ENCODE measurements at regions of chr9 and their contacts with region 1.

Region 1: GRCh38 chr9:123349691-123350480 is 6.1 kb upstream of the CRB2 start:
- DNase-seq: peak; percentile 34
- H3K4me3 ChIP-seq: no peak overlapping the region
- H3K27ac ChIP-seq: no peak overlapping the region
- H3K4me1 ChIP-seq: peaks cover 4% of the 10 kb centered on the region
- H3K27me3 ChIP-seq: no peaks in the 10 kb centered on the region
- CTCF ChIP-seq: peak; percentile 95 to 99

Region 2: DNA sequence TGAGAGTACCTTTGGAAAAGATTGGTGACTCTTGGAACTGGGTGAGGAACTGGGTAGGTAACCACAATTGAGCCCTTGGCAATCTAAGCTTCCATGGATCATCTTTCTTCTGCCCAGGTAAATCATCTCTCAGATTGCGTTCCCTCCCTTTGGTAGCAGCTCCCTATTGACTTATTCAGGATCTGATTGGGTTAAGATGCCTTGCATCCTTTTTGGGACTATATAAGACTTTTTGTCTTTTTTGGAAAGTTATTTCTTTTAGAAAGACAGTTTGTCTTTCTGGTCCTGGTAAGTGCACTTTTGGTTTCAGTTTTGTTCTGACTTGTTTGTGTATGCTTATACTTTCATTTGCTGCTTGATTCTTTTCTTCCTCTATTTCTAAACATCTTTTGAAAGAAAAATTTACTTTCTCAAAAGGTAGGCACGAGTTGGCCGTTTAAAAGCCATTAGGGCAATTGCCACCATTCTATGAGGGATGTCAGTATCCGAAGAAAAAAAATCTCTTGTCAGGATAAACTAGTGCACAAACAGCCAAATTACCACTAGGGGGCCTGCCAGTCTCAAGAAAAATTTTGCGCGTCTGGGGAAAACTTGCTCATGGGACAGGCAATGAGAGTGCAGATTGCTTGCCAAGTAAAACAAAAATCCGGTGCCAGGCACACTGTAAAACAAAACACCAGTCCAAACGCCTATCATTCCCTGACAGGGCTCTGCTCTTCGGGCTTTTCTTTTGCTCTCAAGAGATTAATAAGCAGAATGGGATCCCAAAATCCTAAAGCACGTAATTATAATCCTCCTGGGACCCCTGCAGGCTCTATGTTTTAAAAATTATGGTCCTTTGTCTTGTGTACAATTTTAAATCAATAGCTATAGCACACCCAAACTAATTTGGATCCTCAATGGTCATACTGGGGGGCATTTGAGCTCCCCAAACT is 885.0 kb before region 1 on chr9:
- CTCF ChIA-PET with region 1: no interaction called
- dilution Hi-C with region 1: no loop called
- in situ Hi-C with region 1: loop called in 1 of 2 experiments (anchors 25 kb)
- intact Hi-C with region 1: loop called (anchors 1 kb)
- DNase-seq: peak; percentile 80
- H3K4me3 ChIP-seq: peak overlapping the region; percentile 47 to 72 (median 60)
- H3K27ac ChIP-seq: no peak overlapping the region
- H3K4me1 ChIP-seq: peaks cover 5% of the 10 kb centered on the region
- H3K27me3 ChIP-seq: no peaks in the 10 kb centered on the region
- CTCF ChIP-seq: peak; percentile 73 to 82

Region 3: DNA sequence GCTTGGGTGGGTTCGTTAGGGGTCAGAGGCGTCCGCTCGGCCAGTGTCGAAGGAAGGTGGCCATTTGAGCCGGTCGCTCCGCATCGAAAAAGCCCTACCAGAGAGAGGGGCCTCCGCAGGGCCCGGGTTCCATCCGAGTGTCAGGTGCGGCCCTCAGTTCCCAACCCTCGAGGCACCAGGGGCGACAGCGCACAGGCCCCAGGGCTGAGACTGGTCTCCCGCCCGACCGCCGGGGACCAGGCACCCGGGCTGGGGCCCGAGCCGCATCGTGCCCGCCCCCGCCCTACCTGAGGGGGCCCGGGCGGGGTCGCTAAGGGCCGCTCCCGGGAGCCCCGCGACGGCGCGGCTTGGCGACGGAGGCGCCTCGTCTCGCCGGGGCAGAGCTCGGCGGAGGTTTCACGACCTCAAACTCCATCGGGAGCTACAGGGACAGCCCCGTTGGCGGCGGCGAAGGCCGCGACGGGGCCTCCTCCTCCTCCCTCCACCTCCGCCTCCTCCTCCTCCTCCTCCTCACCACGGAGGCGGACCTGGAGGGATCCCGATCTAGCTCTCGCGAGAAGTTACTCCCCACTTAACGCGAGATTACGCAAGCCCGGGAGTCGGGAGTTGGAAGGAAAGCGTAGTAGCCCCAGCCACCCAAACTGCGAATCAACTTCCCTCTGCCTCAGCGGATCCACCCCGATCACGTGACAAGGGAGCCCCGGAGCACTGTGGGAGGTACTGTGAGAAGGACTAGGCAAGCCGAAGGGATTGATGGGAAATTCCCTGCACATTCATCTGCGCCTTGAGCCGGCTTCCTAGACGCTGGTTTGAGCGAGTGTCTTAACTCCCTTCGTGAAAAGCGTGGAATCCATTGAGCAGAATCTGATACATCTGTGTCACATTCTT is 444.8 kb before region 1 on chr9 and contains the start of gene RC3H2:
- CTCF ChIA-PET with region 1: no interaction called
- dilution Hi-C with region 1: no loop called
- in situ Hi-C with region 1: no loop called
- intact Hi-C with region 1: loop called (anchors 10 kb)
- DNase-seq: peak; percentile 100
- H3K4me3 ChIP-seq: peak within 1 kb of the TSS; percentile 64 to 88 (median 80)
- H3K27ac ChIP-seq: peak within 1 kb of the TSS; percentile 84
- H3K4me1 ChIP-seq: peaks cover 2% of the 10 kb centered on the region
- H3K27me3 ChIP-seq: no peaks in the 10 kb centered on the region
- CTCF ChIP-seq: no peak
- total RNA-seq, gene RC3H2: 55.6 to 68.7 TPM

Region 4: DNA sequence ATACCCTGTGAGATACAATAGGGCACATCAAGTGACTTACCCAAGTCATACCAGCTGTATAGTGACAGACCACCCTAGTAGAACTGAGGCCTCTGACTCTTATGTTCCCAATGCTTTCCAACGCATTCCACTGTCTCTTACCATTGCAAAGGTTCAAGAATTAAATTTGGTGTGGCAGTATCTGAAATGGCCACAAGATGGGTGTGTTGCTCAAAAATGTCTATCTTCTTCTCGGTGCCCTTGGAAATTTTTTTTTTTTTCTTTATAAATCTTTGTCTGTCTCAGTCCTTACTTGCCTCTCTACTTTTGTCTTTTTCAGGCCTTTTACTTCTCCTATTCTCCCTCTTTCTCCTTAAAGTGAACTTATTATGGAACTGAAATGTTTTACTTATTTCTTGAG is 268.1 kb before region 1 on chr9:
- CTCF ChIA-PET with region 1: interaction called, 4 read pairs
- dilution Hi-C with region 1: no loop called
- in situ Hi-C with region 1: loop called (anchors 5 kb)
- intact Hi-C with region 1: loop called (anchors 1 kb)
- DNase-seq: peak; percentile 23
- H3K4me3 ChIP-seq: no peak overlapping the region
- H3K27ac ChIP-seq: no peak overlapping the region
- H3K4me1 ChIP-seq: peaks cover 3% of the 10 kb centered on the region
- H3K27me3 ChIP-seq: no peaks in the 10 kb centered on the region
- CTCF ChIP-seq: peak; percentile 52 to 61

Region 5: DNA sequence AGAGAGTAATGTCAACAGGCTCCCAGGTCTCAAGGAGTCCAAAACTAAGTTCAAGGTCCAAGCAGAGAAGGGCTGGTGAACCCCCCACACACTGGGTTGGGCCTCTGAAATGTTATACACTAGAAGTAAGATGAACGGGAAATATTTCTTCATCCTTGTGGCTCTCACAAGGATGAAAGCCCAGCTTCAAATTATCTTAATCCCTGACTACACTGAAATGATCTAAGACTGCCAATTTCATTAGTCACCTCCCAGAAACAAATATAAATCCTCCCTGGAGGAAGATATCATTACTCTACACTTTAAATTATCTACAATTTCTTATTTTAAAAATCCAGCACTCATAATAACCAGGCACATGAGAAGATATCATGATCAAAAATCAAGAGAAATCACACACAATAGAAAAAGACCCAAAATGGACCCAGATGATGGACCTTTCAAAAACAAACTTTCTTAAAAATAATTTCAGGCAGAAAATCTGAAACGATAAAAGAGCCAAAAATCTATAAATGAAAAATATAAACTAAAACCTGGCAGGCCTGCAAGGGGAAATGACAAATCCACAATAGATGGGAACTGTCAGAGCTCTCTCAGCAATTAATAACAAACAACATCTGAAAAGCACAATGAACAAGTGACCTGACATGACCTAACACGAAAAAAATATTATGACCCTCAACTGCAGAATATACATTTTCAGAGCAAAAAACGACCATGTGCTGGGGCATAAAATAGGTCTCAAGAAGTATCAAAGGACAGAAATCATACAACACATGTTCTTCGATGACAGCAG is 199.0 kb before region 1 on chr9:
- CTCF ChIA-PET with region 1: no interaction called
- dilution Hi-C with region 1: no loop called
- in situ Hi-C with region 1: no loop called
- intact Hi-C with region 1: no loop called
- DNase-seq: no peak
- H3K4me3 ChIP-seq: no peak overlapping the region
- H3K27ac ChIP-seq: no peak overlapping the region
- H3K4me1 ChIP-seq: no peaks in the 10 kb centered on the region
- H3K27me3 ChIP-seq: no peaks in the 10 kb centered on the region
- CTCF ChIP-seq: no peak

Region 6: GRCh38 chr9:123225374-123225813 is 124.5 kb before region 1 on chr9:
- CTCF ChIA-PET with region 1: no interaction called
- dilution Hi-C with region 1: no loop called
- in situ Hi-C with region 1: no loop called
- intact Hi-C with region 1: loop called (anchors 5 kb)
- DNase-seq: peak; percentile 88
- H3K4me3 ChIP-seq: no peak overlapping the region
- H3K27ac ChIP-seq: no peak overlapping the region
- H3K4me1 ChIP-seq: peaks cover 13% of the 10 kb centered on the region
- H3K27me3 ChIP-seq: no peaks in the 10 kb centered on the region
- CTCF ChIP-seq: peak; percentile 33 to 70

Region 7: GRCh38 chr9:123326662-123327093 is 23.2 kb before region 1 on chr9:
- CTCF ChIA-PET with region 1: no interaction called
- dilution Hi-C with region 1: no loop called
- in situ Hi-C with region 1: no loop called
- intact Hi-C with region 1: no loop called
- DNase-seq: no peak
- H3K4me3 ChIP-seq: no peak overlapping the region
- H3K27ac ChIP-seq: no peak overlapping the region
- H3K4me1 ChIP-seq: peaks cover 13% of the 10 kb centered on the region
- H3K27me3 ChIP-seq: no peaks in the 10 kb centered on the region
- CTCF ChIP-seq: no peak

Region 8: DNA sequence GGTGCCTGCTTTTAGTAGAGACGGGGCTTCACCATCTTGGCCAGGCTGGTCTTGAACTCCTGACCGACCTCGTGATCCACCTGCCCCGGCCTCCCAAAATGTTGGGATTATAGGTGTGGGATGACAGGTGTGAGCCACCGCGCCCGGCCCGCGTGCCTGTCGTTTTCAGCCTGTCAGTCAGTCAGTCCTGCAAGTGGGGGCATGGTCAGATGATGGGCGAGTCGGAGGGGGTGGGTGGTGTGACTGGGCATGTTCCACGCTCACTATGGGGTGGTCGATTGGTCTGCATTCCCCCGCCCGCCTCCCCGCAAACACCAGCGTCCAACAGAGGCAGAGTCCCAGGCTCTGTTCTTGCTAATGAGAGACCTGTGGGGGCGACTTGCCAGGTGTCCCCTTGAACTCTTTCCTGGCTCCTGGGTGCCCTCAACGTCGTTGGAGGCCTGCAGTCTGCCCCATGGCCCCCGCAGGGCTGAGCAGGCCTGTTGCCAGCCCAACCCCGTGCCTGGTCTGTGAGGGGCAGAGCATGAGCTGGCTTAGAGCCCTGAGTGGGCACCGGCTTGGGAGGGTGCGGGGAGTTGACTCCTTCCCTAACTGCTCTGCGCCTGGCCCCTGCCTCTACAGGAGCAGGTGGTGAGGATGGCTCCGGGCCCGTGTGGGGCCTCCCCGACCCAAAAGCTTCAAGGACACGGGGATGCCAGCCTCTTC is 29.2 kb after region 1 on chr9:
- CTCF ChIA-PET with region 1: no interaction called
- dilution Hi-C with region 1: no loop called
- in situ Hi-C with region 1: no loop called
- intact Hi-C with region 1: no loop called
- DNase-seq: no peak
- H3K4me3 ChIP-seq: no peak overlapping the region
- H3K27ac ChIP-seq: no peak overlapping the region
- H3K4me1 ChIP-seq: no peaks in the 10 kb centered on the region
- H3K27me3 ChIP-seq: no peaks in the 10 kb centered on the region
- CTCF ChIP-seq: no peak